Cardiac septum (tissue), 1 donor: ENCODE measurements at regions of chr1 and their contacts with region 1.

Region 1: GRCh38 chr1:87328272-87329050 is at the start of gene LMO4:
- DNase-seq: peak; percentile 97
- total RNA-seq, gene LMO4: 22.6 TPM

Region 2: GRCh38 chr1:87131809-87132283 is 196.6 kb before region 1 on chr1:
- intact Hi-C with region 1: loop called (anchors 5 kb)
- DNase-seq: peak; percentile 94

Region 3: GRCh38 chr1:87151500-87152421 is 176.7 kb before region 1 on chr1:
- intact Hi-C with region 1: loop called (anchors 5 kb)
- DNase-seq: peak; percentile 84

Region 4: DNA sequence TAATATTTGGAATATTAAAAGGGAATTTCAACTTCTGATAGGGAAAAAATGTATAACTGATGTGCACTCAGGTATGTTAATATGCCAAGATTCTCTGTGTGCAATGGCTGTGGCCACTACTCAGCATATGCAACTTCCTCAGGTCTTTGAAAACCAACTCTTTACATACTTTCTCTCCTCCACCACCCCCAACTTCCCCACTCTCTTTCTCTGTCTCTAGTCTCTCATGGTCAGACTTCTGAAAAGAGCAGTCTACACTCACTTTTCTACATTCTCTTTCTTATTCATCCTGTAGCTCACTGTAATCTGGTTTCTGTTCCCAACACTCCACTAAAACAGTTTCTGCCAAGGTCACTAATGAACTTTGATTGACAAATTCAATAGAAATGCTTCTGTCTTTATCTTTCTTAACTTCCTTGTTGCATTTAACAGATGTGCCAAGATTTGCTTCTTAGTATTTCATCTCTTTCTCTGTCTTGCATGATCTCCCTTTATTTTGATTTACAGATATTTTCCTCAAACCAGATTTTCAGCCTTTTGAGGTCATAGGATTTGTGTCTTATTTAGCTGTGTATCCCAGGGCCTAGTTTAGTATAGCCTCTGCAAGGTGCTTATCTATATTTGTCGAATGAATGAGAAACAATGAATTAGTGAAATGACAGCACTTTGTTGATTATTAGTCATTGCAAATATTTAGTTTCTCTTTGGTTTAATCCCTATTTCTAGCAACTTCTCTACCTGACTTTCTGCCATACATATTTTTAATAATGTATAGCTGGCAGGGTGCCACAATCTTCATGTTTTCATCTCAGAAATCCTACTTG is 169.1 kb after region 1 on chr1:
- intact Hi-C with region 1: no loop called
- DNase-seq: no peak

Region 5: DNA sequence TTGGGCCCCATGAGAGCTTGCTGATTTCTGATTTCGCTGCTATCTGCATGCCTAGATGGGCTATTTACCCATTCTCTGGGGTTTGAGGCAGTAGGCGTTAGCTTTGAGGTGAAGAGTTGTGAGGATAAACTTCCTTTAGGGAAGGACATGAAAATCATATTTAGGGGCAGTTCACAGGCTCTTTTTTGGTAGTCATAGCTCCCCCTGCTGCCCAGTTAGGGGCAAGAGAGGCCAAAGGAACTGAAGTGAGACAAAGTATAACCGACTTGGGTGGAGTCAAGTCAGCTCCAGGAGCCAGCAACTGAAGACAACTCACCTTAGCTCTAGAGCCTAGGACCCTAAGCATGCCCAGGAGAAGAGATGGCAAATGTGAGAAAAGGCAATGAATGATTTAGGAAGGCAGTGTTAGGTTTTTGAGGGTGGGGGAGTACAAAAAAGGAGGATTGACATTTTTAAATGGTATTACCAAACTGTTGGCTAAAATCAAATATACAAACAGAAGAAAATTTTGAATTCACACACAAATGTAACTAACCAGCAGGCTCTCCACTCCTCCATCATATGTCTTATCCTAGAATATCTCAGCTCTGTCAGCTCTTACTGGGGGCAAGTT is 625.4 kb after region 1 on chr1:
- intact Hi-C with region 1: loop called (anchors 2 kb)
- DNase-seq: peak; percentile 78

Region 6: DNA sequence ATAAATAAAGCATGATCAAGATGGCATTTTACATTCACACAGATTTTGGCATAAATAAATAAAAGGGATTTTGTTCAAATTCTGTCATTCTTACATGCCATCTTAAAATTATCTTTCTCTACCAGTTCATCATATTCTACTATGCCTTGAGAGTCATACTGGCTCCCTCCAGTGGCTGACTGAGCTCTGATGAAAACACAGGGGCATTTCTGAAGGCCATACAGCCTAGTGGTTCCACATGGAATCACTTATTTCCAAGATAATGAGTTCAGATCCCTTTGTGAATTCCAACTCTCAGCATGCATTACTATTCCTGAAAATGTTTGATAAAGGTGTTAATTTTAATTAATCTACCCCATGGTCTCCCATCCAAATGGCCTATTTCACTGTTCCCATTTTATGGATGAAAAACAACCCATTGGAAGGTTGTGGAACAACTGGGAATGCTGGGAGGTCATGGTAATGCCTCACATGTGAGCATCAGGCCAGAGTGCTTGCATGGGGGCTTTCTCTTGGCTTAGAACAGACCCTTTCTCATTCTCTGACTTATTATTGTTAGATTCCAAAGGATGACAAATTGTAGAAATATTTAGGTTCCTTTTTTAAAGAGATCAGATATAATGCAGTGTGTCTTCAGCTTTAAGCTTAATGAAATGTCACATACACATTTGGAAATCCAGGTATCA is 733.2 kb after region 1 on chr1:
- intact Hi-C with region 1: loop called (anchors 10 kb)
- DNase-seq: no peak